HEK293T (cell line): ENCODE measurements at regions of chr1 and their contacts with region 1.

Region 1: GRCh38 chr1:23790696-23791515 is at the start of gene LYPLA2:
- DNase-seq: peak; percentile 89

Region 2: GRCh38 chr1:23777979-23778814 is 12.7 kb before region 1 on chr1 and contains the start of gene PITHD1:
- CTCF ChIA-PET with region 1: no interaction called
- POLR2A ChIA-PET with region 1: interaction called, 42 read pairs
- DNase-seq: peak; percentile 95

Region 3: DNA sequence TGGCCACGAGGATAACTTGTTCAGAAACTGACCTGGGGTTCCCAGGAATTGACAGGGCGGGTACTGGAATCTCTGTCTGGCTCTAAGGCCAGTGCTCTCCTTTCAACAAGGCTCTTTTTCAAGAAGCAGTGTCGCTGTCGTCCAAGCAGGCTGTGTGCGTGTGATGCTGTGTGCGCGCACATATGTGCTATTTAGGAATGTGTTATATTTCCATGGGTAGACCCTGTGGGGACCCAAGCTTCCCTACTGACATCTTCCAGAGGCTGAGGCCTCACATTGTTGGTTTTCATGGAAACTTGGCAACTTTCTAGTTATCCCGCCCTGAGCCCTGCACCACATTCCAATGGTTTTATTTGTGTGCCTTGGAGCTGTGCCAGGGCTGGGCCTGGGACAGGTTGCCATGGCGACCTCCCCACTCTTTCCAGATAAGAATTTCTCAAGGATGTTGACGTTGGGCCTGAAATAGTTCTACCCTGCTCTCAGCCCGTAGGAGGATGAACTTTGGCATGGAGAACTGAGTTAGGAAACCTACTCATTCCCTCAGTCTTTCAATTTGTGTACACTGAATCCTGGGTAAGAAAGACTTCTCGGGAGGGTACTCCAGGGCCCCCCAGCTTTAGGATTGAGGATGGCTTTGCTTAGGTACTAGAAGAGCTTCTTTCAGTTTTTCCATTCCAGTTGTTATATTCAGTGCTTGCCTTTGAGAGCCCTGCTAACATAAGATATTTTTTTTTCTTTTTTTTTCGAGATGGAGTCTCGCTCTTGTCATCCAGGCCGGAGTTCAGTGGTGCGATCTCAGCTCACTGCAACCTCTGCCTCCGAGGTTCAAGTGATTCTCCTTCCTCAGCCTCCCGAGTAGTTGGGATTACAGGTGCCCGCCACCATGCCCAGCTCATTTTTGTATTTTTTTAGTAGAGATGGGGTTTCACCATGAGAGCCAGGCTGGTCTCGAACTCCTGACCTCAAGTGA is 228.0 kb after region 1 on chr1:
- CTCF ChIA-PET with region 1: no interaction called
- POLR2A ChIA-PET with region 1: no interaction called
- DNase-seq: peak; percentile 88